Activated naive CD4-positive, alpha-beta T cell treated with anti-CD3 and anti-CD28 coated beads for 36 hours (primary cell): ENCODE measurements at regions of chr12 and their contacts with region 1.

Region 1: DNA sequence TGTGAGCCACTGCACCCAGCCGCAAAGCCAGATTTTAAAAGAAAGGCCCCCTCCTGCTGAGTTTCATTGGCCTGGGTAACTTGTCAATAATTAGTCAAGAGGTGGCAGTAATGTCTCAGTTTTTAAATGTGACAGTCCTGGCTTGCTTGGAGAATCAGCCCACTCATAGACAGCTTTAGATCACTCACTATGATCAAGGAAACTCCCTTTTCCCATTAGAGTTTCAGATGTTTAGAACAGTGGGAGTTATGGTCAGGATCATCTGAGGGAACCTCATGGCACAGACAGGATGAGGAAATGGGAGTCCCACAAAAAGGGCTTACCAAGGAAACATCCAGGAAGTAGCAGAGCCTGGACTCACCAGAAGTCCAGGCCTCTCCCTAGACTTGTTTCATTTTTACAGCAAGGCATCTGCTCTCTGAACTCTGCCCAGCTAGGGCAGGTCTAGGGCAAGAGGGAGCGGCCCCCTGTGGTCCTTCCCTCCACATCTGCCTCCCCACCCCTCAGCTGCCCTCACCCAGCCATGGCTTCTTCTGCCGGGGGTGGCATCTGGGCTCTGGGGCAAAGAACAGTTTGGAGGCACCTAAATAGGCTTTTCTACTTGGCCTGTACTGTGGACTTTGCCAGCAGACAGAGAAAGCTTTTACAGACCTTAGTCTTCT is 11.2 kb downstream of the BCL2L14 start:
- DNase-seq: peak; percentile 9
- H3K4me3 Mint-ChIP-seq: no peak overlapping the region
- H3K27ac Mint-ChIP-seq: no peak overlapping the region
- H3K4me1 Mint-ChIP-seq: peaks cover 4% of the 10 kb centered on the region
- H3K27me3 Mint-ChIP-seq: no peaks in the 10 kb centered on the region

Region 2: DNA sequence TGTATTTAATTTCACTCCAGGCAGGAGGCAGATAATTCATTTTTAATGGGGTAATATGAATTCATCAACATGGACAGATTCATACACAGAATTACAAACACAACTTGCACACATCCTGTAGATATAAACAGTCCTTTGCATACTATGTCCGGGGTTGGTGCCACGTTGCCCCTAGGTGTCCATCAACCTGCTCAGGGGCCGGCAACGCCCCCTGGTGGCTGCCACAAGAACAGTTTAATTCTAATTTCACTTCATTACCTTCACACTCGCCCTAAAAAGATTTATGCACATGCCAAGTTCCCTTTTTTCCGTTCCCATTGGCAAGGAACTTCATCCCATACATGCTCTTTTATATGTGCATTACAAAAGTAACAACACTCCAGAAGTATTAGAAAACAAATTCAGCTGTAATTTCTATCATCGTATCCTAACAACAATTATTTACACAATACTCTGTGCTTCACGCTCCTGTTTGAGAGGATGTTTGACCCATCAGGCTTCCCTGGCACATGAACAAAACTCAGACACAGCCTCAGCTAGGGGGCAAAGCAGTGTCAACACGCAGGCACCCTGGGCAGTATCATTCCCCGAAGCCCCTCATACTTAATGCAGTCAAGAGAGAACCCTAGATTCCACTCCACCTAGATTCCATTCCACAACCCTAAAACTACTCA is 252.5 kb after region 1 on chr12:
- CTCF ChIA-PET with region 1: interaction called, 17 read pairs
- intact Hi-C with region 1: loop called (anchors 1 kb)
- DNase-seq: peak; percentile 74
- H3K4me3 Mint-ChIP-seq: no peak overlapping the region
- H3K27ac Mint-ChIP-seq: no peak overlapping the region
- H3K4me1 Mint-ChIP-seq: peaks cover 27% of the 10 kb centered on the region
- H3K27me3 Mint-ChIP-seq: no peaks in the 10 kb centered on the region

Region 3: DNA sequence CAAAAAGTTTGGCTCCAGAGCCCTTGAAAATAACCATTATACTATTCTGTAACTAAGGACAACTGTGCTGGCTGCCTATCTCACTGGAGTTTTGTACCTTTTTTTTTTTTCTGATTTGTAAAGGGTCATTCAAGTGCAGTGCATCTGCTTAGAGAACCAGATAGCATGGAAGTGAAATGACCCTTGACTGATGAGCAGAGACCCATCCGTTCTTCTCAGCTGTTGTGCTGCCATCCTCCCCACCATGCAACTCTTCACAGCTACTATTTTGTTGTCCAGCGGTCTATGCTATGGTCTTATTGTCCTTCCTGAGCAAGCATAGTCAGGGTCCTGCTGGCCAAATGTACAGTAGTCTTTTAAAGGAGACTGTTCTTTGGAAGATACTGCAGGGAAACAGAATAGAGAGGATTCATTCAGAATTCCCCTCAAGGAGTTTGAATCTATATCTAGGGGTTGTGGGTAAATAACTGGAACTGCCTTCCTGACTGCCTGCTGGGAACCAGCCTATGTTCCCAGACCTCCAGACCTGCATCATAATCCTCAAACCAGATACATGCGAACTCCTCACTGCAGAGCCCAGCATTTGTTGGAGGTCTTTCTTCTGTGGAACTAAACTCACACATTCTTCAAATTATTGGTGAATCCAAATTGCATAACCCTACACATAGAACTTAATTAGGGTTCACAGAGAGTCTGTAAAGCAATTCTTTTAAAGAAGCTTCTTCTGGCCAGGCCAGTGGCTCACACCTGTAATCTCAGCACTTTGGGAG is 572.9 kb after region 1 on chr12:
- CTCF ChIA-PET with region 1: no interaction called
- intact Hi-C with region 1: loop called (anchors 5 kb)
- DNase-seq: no peak
- H3K4me3 Mint-ChIP-seq: no peak overlapping the region
- H3K27ac Mint-ChIP-seq: no peak overlapping the region
- H3K4me1 Mint-ChIP-seq: peaks cover 7% of the 10 kb centered on the region
- H3K27me3 Mint-ChIP-seq: no peaks in the 10 kb centered on the region